K562 (cell line): ENCODE measurements at regions of chr4 and their contacts with region 1.

Region 1: GRCh38 chr4:114229706-114230105 is 250.3 kb upstream of the ARSJ start:
- DNase-seq: no peak
- ATAC-seq: no peak
- H3K4me3 ChIP-seq: no peak overlapping the region
- H3K27ac ChIP-seq: no peak overlapping the region
- H3K4me1 ChIP-seq: no peaks in the 10 kb centered on the region
- H3K27me3 ChIP-seq: no peaks in the 10 kb centered on the region
- CTCF ChIP-seq: no peak
- EP300 ChIP-seq: no peak
- POLR2A ChIP-seq: no peak
- RAD21 ChIP-seq: no peak

Region 2: GRCh38 chr4:114208574-114209151 is 21.0 kb before region 1 on chr4:
- CTCF ChIA-PET with region 1: no interaction called
- POLR2A ChIA-PET with region 1: no interaction called
- in situ Hi-C with region 1: no loop called
- intact Hi-C with region 1: no loop called
- DNase-seq: no peak
- ATAC-seq: no peak
- H3K4me3 ChIP-seq: no peak overlapping the region
- H3K27ac ChIP-seq: no peak overlapping the region
- H3K4me1 ChIP-seq: no peaks in the 10 kb centered on the region
- H3K27me3 ChIP-seq: no peaks in the 10 kb centered on the region
- CTCF ChIP-seq: no peak
- EP300 ChIP-seq: no peak
- POLR2A ChIP-seq: no peak
- RAD21 ChIP-seq: no peak

Region 3: GRCh38 chr4:114281164-114281960 is 51.7 kb after region 1 on chr4:
- CTCF ChIA-PET with region 1: no interaction called
- POLR2A ChIA-PET with region 1: no interaction called
- in situ Hi-C with region 1: no loop called
- intact Hi-C with region 1: no loop called
- DNase-seq: no peak
- ATAC-seq: no peak
- H3K4me3 ChIP-seq: no peak overlapping the region
- H3K27ac ChIP-seq: no peak overlapping the region
- H3K4me1 ChIP-seq: no peaks in the 10 kb centered on the region
- H3K27me3 ChIP-seq: no peaks in the 10 kb centered on the region
- CTCF ChIP-seq: no peak
- EP300 ChIP-seq: no peak
- POLR2A ChIP-seq: no peak
- RAD21 ChIP-seq: no peak

Region 4: GRCh38 chr4:114378306-114378903 is 148.7 kb after region 1 on chr4:
- CTCF ChIA-PET with region 1: no interaction called
- POLR2A ChIA-PET with region 1: no interaction called
- in situ Hi-C with region 1: no loop called
- intact Hi-C with region 1: loop called (anchors 10 kb)
- DNase-seq: no peak
- ATAC-seq: no peak
- H3K4me3 ChIP-seq: no peak overlapping the region
- H3K27ac ChIP-seq: no peak overlapping the region
- H3K4me1 ChIP-seq: no peaks in the 10 kb centered on the region
- H3K27me3 ChIP-seq: no peaks in the 10 kb centered on the region
- CTCF ChIP-seq: no peak
- EP300 ChIP-seq: no peak
- POLR2A ChIP-seq: no peak
- RAD21 ChIP-seq: no peak

Region 5: DNA sequence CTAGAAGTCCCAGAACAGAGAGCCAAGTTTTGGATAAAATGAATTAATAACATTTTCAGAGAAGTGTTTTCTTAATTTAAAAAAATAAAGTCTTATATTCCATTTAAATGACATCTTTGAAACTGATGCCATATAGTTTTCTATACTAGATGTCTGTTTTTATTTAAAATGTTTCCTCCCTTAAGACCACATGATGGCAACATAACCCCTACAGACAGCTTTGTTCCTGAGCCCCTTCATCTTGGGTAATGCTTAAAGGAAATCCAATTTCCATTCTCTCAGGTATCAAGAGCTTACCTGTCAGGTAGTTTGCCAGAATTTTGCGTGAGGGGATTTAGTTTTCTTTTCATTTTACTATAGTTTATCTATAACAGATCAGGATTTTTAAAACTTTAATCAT is 187.5 kb after region 1 on chr4:
- CTCF ChIA-PET with region 1: no interaction called
- POLR2A ChIA-PET with region 1: no interaction called
- in situ Hi-C with region 1: no loop called
- intact Hi-C with region 1: no loop called
- DNase-seq: peak in 1 of 4 experiments; percentile 6
- ATAC-seq: no peak
- H3K4me3 ChIP-seq: no peak overlapping the region
- H3K27ac ChIP-seq: no peak overlapping the region
- H3K4me1 ChIP-seq: no peaks in the 10 kb centered on the region
- H3K27me3 ChIP-seq: no peaks in the 10 kb centered on the region
- CTCF ChIP-seq: no peak
- EP300 ChIP-seq: no peak
- POLR2A ChIP-seq: no peak
- RAD21 ChIP-seq: no peak